Dorsolateral prefrontal cortex (tissue), 120 donors: ENCODE measurements at regions of chr1 and their contacts with region 1.

Region 1: DNA sequence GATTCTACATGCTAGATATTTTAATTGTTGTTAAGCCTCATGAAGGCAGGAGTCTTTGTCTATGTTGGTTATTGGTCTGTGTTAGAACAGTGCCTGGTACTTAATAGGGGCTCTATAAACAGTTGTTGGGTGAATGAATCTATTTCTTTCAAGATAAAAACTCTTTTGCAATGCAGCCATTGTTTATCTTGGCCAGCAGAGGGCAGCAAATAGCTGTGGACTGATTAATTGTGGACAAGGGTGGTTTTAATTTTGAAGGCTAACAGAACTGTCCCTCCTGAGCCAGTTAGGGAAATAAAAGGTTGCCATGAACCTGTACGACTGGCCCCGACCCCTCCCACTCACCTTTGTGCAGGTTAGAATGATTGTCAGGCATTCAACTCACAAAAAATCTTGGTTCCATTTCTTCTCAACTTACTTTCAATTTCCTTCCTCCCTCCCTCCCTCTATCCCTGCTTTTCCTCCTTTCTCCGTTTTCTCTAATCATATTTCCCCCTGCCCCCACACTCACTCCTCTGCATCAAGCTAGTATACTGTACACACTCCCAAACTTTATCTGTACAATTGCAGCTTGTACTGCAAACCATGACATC is 66.3 kb upstream of the DIRAS3 start:
- DNase-seq: peak in 4 of 10 donors; percentile 52 to 69 (median 57)
- H3K4me3 ChIP-seq: peak overlapping the region in 26 of 59 donors; percentile 11 to 46 (median 34)
- H3K27ac ChIP-seq: peak overlapping the region in 3 of 59 donors; percentile 15 to 51 (median 38)
- H3K27me3 ChIP-seq: no peaks in the 10 kb centered on the region
- CTCF ChIP-seq: peak; percentile 76 to 97 (median 89)

Region 2: DNA sequence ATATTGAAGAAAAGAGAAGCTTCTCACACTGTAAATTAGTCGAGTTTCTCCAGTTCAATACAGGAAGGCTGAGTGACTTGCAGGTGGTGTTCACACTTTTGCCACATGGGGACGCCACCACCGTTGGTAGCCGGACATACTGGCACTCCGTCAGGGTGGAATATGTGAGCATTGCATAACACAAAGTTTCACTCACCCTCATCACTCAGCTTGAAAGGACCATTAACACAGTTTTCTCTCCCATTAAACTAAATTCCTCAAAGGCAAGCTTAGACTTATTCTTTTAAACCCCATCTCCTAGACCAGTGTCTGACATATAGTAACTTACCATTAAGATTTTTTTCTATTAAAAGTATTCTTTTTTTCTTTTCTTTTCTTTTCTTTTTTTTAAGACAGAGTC is 581.3 kb before region 1 on chr1:
- intact Hi-C with region 1: loop called in 1 of 2 experiments (anchors 10 kb)
- DNase-seq: peak; percentile 13 to 75 (median 60)
- H3K4me3 ChIP-seq: no peak overlapping the region
- H3K27ac ChIP-seq: no peak overlapping the region
- H3K27me3 ChIP-seq: no peaks in the 10 kb centered on the region
- CTCF ChIP-seq: peak; percentile 60 to 90 (median 76)

Region 3: GRCh38 chr1:67853704-67854103 is 263.0 kb before region 1 on chr1:
- intact Hi-C with region 1: loop called (anchors 2 to 5 kb)
- DNase-seq: peak in 7 of 10 donors; percentile 22 to 63 (median 53)
- H3K4me3 ChIP-seq: no peak overlapping the region
- H3K27ac ChIP-seq: no peak overlapping the region
- H3K27me3 ChIP-seq: no peaks in the 10 kb centered on the region
- CTCF ChIP-seq: peak in 55 of 56 donors; percentile 11 to 73 (median 56)

Region 4: GRCh38 chr1:68087184-68087583 is 29.6 kb before region 1 on chr1:
- intact Hi-C with region 1: no loop called
- DNase-seq: no peak
- H3K4me3 ChIP-seq: no peak overlapping the region
- H3K27ac ChIP-seq: no peak overlapping the region
- H3K27me3 ChIP-seq: no peaks in the 10 kb centered on the region
- CTCF ChIP-seq: no peak

Region 5: DNA sequence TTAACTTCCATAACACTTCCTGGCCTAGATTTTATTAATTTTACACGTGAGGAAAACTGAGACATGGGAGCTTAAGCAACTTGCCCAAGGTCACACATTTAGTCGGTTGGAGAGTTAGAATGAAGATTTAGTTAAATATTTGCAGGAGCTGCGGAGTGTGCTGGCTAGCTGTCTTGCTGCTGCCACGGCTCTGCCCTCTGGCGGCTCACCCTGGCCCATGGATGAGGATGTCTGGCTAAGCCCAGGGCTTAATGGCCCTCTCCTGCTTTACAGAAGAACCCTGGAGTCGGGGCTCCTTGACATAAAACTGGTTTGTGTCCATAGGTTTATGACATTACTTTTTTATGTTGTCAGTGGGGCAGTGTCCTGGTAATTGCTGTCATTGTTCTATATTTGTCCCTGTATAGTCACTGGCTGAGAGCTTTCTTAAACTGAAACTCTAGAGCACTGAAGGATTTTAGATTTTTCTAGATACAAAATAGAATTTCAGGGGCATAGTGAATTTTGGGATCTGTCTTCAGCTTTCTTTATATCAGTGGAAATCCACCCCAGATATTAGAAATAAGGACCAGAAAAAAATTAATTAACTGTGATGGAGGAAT is 204.4 kb after region 1 on chr1:
- intact Hi-C with region 1: loop called in 1 of 2 experiments (anchors 5 kb)
- DNase-seq: peak in 8 of 10 donors; percentile 37 to 65 (median 45)
- H3K4me3 ChIP-seq: no peak overlapping the region
- H3K27ac ChIP-seq: no peak overlapping the region
- H3K27me3 ChIP-seq: no peaks in the 10 kb centered on the region
- CTCF ChIP-seq: peak in 54 of 56 donors; percentile 12 to 75 (median 55)

Region 6: GRCh38 chr1:68442822-68443556 is 326.2 kb after region 1 on chr1:
- intact Hi-C with region 1: loop called in 1 of 2 experiments (anchors 5 kb)
- DNase-seq: peak in 2 of 10 donors; percentile 5 to 27
- H3K4me3 ChIP-seq: no peak overlapping the region
- H3K27ac ChIP-seq: no peak overlapping the region
- H3K27me3 ChIP-seq: peaks cover 0 to 4% (median 0%) of the 10 kb centered on the region in 45 donors
- CTCF ChIP-seq: peak; percentile 20 to 66 (median 56)